Activated T-helper 2 cell treated with anti-CD3 and anti-CD28 coated beads, Interferon-gamma antibody, Interleukin-2, Interleukin-4, amounts not matched to agents 10 μg/mL and 5 μg/mL and 100 μg/mL, durations not matched to agents 14 hours and 24 hours and 36 hours (primary cell): ENCODE measurements at regions of chr16 and their contacts with region 1.

Region 1: DNA sequence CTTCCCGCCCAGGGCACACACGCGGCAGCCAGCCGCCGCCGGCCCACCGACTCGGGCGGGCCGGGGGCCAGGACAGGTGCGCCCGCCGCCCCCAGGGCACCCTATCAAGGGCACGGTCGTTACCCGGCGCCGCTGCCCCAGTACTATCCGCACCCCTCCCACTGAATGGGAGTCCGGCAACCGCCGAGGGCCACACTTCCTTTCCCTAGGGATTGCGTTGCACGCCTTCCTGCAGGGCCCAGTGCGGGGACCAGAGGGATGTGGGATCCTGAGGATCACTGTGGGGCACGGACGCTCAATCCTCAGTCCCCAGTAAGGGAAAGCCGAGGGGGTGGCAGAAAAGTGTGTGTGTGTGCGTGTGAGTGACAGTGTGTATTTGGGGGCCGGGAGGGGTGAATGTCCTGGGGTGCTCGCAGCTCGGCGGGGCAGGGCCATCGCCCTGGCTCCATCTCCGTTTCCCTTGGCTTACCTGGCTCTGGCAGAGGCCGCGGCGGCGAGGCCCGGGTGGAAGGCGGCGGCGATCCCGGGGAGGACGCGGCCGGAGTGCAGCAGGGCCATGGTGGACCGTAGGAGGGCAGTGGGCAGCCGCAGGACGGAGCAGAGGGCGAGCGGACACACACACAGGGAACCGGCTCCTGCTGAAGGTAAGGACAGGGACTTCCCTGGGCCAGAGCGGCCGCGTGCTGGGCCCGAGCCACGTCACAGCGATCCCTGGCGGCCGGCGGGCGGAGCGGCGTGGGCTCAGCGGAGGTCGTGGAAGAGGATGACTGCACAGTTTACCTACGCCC is at the start of gene GOT2:
- DNase-seq: peak; percentile 76
- H3K4me3 Mint-ChIP-seq: peak within 1 kb of the TSS; percentile 99
- H3K27ac Mint-ChIP-seq: peak within 1 kb of the TSS; percentile 98
- H3K4me1 Mint-ChIP-seq: peaks cover 25% of the 10 kb centered on the region
- H3K27me3 Mint-ChIP-seq: peaks cover 2% of the 10 kb centered on the region
- total RNA-seq, gene GOT2: 121 and 123 TPM in 2 replicates

Region 2: DNA sequence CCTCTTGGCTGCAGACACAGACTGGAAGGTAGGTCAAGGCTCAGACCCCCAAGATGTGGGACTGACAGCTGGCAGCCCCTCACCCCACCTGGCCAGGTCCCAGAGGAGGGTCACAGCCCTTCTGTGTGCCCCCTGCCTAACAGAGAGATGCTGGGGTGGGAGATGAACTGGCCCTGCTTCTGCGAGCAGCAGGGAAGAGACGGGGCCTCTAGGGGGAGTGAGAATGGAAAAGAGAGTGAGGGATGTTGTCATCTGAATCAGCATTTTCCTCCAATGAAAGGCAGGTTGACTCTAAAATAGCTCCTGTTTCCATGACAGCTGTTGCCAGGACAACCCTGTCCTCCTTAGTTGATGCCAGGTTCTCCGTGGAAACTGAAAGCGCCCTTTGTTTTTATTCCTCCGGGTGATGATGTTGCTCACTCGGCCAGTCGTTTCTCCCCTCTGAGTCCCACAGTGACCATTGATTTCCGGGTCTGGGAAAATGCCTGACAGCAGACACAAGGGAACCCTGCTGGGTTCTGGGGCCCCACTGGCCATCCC is 238.8 kb before region 1 on chr16:
- intact Hi-C with region 1: loop called (anchors 5 kb)
- DNase-seq: peak; percentile 71
- H3K4me3 Mint-ChIP-seq: no peak overlapping the region
- H3K27ac Mint-ChIP-seq: peak overlapping the region; percentile 63
- H3K4me1 Mint-ChIP-seq: peaks cover 9% of the 10 kb centered on the region
- H3K27me3 Mint-ChIP-seq: peaks cover 2% of the 10 kb centered on the region

Region 3: DNA sequence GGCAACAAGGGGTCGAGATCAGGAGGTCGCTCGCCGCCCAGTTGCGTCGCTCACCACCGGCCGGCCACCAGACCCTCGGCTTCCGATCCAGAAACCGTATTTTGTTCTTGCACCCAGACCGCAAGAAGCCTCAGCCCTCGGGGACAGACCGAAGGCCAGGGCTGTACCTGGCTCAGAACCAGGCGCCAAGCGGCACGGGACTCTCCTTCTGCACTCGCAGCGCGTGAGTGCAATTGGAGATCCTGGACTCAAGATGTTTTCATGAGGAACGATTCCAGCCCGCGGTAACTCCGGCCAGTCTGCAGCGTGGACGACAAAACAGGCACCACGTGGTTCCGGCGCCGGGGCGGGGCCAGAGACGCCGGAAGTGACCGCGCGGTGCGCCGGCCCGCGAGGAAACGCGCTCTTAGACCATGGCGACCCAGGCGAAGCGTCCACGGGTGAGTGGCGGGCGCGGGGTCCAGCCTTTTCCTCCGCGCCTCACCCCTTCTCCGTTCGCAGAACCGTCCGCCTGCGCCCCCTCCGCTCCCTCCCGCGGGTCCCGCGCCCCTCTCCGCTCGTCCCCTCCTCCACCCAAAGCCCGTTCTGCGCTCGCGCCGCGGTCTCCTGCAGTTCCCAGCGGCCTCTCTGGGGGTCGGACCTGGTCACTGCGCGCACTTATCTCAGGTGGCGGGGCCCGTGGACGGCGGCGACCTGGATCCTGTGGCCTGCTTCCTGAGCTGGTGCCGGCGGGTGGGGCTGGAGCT is 218.6 kb before region 1 on chr16 and contains the start of gene SETD6:
- intact Hi-C with region 1: loop called (anchors 5 kb)
- DNase-seq: peak; percentile 70
- H3K4me3 Mint-ChIP-seq: peak within 1 kb of the TSS; percentile 86
- H3K27ac Mint-ChIP-seq: peak within 1 kb of the TSS; percentile 73
- H3K4me1 Mint-ChIP-seq: peaks cover 31% of the 10 kb centered on the region
- H3K27me3 Mint-ChIP-seq: no peaks in the 10 kb centered on the region
- total RNA-seq, gene SETD6: 24.4 and 24.7 TPM in 2 replicates

Region 4: DNA sequence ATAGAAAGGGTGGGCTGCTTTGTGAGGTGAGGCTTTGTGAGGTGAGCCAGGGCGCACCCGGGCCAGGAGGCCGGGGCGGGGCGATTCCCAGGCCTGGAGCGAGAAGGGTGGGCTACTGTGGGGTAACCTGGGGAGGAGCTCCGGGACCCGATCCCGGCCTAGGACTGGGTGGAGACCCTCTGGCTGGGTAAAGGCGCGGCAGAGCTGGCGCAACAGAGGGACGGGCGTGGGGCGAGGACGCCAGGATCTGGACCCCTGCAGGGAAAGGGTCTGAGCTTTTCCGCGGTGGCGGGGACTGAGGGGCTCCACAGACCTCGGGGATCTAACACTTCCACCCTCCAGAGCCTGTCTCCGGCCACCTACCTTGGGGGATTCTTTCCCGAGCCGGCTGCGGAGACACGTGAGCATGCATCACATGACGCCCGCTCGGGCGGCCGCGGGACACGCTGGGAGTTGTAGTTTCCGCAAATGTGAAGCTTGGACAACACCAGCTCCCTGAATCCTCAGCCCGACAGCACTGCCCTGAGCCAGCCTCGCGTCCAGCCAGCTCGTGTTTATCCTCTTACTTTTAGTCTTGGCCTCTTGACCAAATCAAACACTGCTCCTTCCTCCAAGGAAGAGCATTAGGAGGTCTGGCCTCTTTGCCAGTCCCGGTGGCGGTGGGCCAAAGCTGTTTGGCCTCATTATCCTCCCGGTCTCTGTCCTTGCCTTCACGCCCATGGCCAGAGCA is 49.3 kb before region 1 on chr16 and contains the start of gene SLC38A7:
- intact Hi-C with region 1: loop called (anchors 5 kb)
- DNase-seq: peak; percentile 65
- H3K4me3 Mint-ChIP-seq: peak within 1 kb of the TSS; percentile 87
- H3K27ac Mint-ChIP-seq: peak within 1 kb of the TSS; percentile 62
- H3K4me1 Mint-ChIP-seq: peaks cover 9% of the 10 kb centered on the region
- H3K27me3 Mint-ChIP-seq: no peaks in the 10 kb centered on the region
- total RNA-seq, gene SLC38A7: 8.8 and 9.8 TPM in 2 replicates

Region 5: DNA sequence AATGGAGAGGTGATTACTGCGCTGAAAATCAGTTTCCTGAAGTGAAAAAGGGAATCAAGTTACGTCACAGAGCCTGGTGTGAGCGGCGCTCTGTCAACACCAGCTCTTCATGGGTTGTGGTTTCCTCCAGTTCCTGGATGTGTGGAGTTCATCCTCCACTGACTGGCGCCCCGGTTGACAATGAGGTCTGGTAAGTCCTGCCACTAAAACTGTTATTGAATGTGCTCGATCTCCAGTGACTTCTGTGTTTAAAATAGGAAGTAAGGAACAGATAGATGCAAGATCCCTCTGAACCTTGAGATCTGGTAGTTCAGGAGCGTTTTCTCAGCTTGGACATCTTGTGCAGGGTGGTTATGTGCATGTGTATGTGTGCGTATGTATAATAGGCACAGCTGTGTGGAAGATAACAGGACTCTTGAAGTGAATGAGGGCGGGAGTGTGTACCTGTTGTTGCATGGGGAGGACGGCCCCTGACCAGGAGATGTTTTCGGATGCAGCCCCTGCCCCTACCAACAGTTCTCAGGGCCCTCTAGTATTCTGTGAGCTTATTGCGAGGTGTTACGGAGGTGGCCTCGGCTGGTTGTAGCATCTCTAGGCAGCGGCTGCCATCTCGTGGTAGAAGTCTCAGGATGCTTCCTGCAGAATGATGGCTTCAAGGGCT is 22.3 kb after region 1 on chr16:
- intact Hi-C with region 1: loop called (anchors 1 kb)
- DNase-seq: peak; percentile 62
- H3K4me3 Mint-ChIP-seq: no peak overlapping the region
- H3K27ac Mint-ChIP-seq: no peak overlapping the region
- H3K4me1 Mint-ChIP-seq: peaks cover 7% of the 10 kb centered on the region
- H3K27me3 Mint-ChIP-seq: no peaks in the 10 kb centered on the region